GM13976 (cell line): ENCODE measurements at regions of chr11 and their contacts with region 1.

Region 1: DNA sequence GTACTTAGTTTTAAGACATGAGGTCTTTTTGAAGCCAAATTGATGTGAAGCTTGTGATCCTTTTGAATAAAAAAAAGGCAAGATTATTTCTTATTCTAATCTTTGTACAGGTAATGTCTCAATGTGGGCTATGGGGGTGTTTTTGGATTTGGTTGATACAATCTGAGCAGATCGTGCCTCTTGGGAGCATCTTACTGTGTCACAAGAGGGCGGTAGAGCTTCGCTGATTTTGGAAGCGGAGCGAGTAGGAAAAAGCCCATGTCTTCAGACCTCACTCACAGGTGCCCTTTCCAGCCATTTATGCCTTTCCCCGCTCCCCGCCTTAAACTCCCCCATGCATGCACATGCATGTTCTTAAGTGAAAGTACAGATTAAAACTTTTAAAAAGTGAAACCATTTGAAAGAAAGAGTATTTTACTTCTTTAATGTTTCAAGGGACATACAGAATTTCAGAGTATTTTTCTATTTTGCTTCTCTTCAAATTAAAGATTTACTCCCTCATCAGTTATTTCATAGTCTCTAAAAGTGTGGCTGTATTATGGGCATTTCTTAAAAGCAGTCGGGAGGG is 18.8 kb downstream of the DDX25 start:
- DNase-seq: peak; percentile 78
- CTCF ChIP-seq: peak; percentile 66

Region 2: GRCh38 chr11:126140932-126141291 is 217.8 kb after region 1 on chr11:
- in situ Hi-C with region 1: no loop called
- DNase-seq: no peak
- CTCF ChIP-seq: no peak

Region 3: DNA sequence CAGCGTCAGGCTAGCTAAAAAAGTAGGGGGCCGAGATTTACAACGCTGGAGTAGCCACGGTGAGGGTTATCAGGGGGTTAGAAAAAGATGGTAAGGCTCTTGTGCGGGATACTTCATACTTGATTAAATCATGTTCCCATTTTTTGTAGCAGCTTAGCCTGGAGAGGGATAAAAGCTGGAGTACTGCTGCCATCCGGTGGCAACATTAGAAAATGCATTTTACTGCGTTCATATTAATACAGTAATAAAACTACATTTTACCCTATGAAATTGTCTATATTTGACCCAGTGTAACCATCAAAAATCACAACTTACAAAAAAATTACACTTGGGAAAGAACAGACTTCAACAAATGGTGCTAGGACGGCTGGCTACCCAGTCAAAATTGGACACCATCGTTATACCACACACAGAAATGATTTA is 271.0 kb after region 1 on chr11:
- in situ Hi-C with region 1: loop called (anchors 10 kb)
- DNase-seq: no peak
- CTCF ChIP-seq: peak; percentile 39